Aorta (tissue), 5 donors: ENCODE measurements at regions of chr14 and their contacts with region 1.

Region 1: GRCh38 chr14:68510201-68511128 is 282.4 kb downstream of the ZFP36L1 start:
- DNase-seq: peak; percentile 81 to 87
- ATAC-seq: peak; percentile 75
- H3K4me3 ChIP-seq: no peak overlapping the region
- H3K27ac ChIP-seq: peak overlapping the region; percentile 61 to 62
- H3K4me1 ChIP-seq: peaks cover 0 to 4% of the 10 kb centered on the region in 2 donors
- H3K27me3 ChIP-seq: no peaks in the 10 kb centered on the region

Region 2: GRCh38 chr14:68466491-68467032 is 43.9 kb before region 1 on chr14:
- intact Hi-C with region 1: loop called in 1 of 2 experiments (anchors 5 kb)
- DNase-seq: peak in 1 of 2 donors; percentile 51
- ATAC-seq: peak; percentile 64
- H3K4me3 ChIP-seq: no peak overlapping the region
- H3K27ac ChIP-seq: peak overlapping the region in 1 of 2 donors; percentile 17
- H3K4me1 ChIP-seq: peaks cover 4 to 6% of the 10 kb centered on the region in 2 donors
- H3K27me3 ChIP-seq: no peaks in the 10 kb centered on the region

Region 3: DNA sequence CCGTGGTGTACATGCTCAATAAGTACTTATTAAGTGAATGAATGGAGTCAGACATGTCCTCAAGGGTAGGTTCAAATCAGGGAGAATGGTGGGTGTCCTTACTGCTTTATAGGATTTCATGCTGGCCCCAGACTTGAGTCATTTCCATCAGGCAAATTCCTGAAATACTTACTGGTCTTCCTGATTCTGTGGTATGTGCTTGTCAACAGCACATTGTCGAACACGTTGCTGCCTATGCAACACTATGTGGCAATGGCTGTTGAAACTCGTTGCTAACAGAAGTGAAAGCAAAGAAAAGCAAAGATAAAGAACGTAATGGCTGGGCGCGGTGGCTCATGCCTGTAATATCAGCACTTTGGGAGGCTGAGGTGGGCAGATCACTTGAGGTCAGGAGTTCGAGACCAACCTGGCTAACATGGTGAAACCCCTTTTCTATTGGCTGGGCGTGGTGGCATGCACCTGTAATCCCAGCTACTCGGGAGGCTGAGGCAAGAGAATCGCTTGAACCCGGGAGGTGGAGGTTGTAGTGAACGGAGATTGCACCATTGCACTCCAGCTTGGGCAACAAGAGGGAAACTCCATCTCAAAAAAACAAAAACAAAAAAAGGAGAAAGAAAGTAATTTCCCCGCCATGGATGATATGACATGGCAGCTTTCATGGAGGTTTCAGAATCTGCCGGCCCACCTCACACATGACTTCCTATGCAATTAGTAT is 67.5 kb after region 1 on chr14:
- intact Hi-C with region 1: no loop called
- DNase-seq: peak in 1 of 2 donors; percentile 83
- ATAC-seq: no peak
- H3K4me3 ChIP-seq: no peak overlapping the region
- H3K27ac ChIP-seq: peak overlapping the region in 1 of 2 donors; percentile 11
- H3K4me1 ChIP-seq: no peaks in the 10 kb centered on the region
- H3K27me3 ChIP-seq: no peaks in the 10 kb centered on the region

Region 4: GRCh38 chr14:68593806-68594561 is 83.5 kb after region 1 on chr14:
- intact Hi-C with region 1: no loop called
- DNase-seq: no peak
- ATAC-seq: no peak
- H3K4me3 ChIP-seq: no peak overlapping the region
- H3K27ac ChIP-seq: no peak overlapping the region
- H3K4me1 ChIP-seq: peaks cover 0 to 2% of the 10 kb centered on the region in 2 donors
- H3K27me3 ChIP-seq: no peaks in the 10 kb centered on the region